Activated CD4-positive, alpha-beta T cell treated with anti-CD3 and anti-CD28 coated beads, Interleukin-2, amount 10 ng/mL, durations not matched to agents 7 days and 5 days (primary cell): ENCODE measurements at regions of chr16 and their contacts with region 1.

Region 1: DNA sequence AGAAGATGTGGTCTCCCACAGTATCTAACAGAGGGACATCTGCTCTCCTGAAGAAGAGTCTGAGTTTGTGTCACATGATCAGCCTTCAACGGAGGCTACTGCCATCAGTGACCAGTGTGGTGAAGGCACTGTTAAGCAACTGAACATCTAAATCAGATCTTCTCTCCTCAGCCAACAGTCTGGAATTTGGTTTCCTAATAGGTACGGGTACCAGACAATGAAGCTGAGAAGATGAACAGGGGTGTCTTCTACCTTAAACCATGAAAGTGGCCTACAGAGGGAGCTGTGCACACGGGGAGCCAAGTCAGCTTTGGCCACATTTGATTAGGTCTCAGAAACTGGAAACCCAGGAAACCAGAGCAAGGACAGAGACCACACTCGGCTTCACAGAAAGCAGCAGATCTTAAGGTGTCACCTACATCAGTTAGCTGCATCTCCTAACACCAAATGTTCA is 41.8 kb downstream of the BRD7 start:
- DNase-seq: peak; percentile 87
- H3K4me3 Mint-ChIP-seq: no peak overlapping the region
- H3K27ac Mint-ChIP-seq: peak overlapping the region; percentile 81
- H3K4me1 Mint-ChIP-seq: peaks cover 69% of the 10 kb centered on the region
- H3K27me3 Mint-ChIP-seq: no peaks in the 10 kb centered on the region

Region 2: GRCh38 chr16:50178491-50178941 is 148.5 kb before region 1 on chr16:
- CTCF ChIA-PET with region 1: no interaction called
- POLR2A ChIA-PET with region 1: no interaction called
- DNase-seq: no peak
- H3K4me3 Mint-ChIP-seq: no peak overlapping the region
- H3K27ac Mint-ChIP-seq: no peak overlapping the region
- H3K4me1 Mint-ChIP-seq: peaks cover 25% of the 10 kb centered on the region
- H3K27me3 Mint-ChIP-seq: no peaks in the 10 kb centered on the region

Region 3: GRCh38 chr16:50273681-50274325 is 53.2 kb before region 1 on chr16:
- CTCF ChIA-PET with region 1: interaction called, 15 read pairs
- POLR2A ChIA-PET with region 1: no interaction called
- DNase-seq: peak; percentile 62
- H3K4me3 Mint-ChIP-seq: peak overlapping the region; percentile 89
- H3K27ac Mint-ChIP-seq: peak overlapping the region; percentile 97
- H3K4me1 Mint-ChIP-seq: peaks cover 97% of the 10 kb centered on the region
- H3K27me3 Mint-ChIP-seq: no peaks in the 10 kb centered on the region

Region 4: DNA sequence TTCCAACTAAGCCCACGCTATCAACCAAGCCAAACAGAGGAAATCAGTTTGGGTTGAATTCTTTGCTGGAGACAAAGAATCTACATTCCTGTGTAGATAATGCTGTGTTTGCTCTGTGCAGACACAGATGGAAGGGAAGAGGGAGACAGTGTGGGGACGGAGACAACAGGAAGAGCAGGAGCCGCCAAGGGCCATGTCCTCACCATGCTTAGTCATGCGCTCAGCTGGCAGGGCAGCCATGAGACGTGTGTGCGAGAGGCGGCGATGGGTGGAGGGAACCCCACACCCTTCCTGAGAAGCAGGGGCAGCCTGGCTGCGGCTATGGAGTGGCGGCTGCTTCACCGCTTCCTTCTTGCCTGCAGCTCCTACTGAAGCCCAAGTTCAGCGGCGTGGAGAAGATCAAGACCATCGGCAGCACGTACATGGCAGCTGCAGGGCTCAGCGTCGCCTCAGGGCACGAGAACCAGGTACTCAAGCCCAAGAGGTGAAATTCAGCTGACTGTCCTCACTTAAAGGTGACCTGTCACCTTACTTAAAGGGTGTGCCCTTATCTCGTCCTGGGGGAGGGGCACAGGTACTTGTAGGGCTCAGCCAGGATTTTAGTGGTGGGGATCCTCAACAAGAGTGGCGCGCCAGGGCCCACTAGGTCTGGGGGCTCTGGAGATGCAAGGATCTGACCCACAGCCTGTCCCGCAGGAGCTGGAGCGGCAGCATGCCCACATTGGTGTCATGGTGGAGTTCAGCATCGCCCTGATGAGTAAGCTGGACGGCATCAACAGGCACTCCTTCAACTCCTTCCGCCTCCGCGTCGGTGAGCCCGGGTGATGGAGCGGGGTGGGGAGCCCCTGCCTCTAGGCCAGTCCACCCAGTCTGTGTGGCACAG is 13.1 kb before region 1 on chr16:
- CTCF ChIA-PET with region 1: interaction called, 32 read pairs
- POLR2A ChIA-PET with region 1: no interaction called
- DNase-seq: peak; percentile 73
- H3K4me3 Mint-ChIP-seq: peak overlapping the region; percentile 47
- H3K27ac Mint-ChIP-seq: peak overlapping the region; percentile 87
- H3K4me1 Mint-ChIP-seq: peaks cover 52% of the 10 kb centered on the region
- H3K27me3 Mint-ChIP-seq: no peaks in the 10 kb centered on the region

Region 5: GRCh38 chr16:50354629-50355456 is 27.9 kb after region 1 on chr16:
- CTCF ChIA-PET with region 1: interaction called, 17 read pairs
- POLR2A ChIA-PET with region 1: interaction called, 6 read pairs
- DNase-seq: no peak
- H3K4me3 Mint-ChIP-seq: no peak overlapping the region
- H3K27ac Mint-ChIP-seq: no peak overlapping the region
- H3K4me1 Mint-ChIP-seq: peaks cover 35% of the 10 kb centered on the region
- H3K27me3 Mint-ChIP-seq: no peaks in the 10 kb centered on the region

Region 6: DNA sequence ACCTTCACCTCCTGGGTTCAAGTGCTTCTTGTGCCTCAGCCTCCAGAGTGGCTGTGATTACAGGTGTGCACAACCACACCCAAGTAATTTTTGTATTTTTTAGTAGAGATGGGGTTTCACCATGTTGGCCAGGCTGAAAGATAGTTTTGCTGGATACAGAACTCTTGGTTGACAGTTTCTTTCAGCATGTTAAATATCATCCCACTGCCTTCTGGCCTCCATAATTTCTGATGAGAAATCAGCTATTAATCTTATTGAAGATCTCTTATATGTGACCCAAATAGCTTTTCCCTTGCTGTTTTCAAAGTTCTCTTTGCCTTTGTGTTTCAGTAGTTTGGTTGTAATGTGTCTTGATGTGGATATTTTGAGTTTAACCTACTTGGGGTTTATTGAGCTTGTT is 92.1 kb after region 1 on chr16:
- CTCF ChIA-PET with region 1: no interaction called
- POLR2A ChIA-PET with region 1: no interaction called
- DNase-seq: no peak
- H3K4me3 Mint-ChIP-seq: no peak overlapping the region
- H3K27ac Mint-ChIP-seq: no peak overlapping the region
- H3K4me1 Mint-ChIP-seq: no peaks in the 10 kb centered on the region
- H3K27me3 Mint-ChIP-seq: peaks cover 21% of the 10 kb centered on the region

Region 7: GRCh38 chr16:50806099-50807062 is 479.4 kb after region 1 on chr16:
- CTCF ChIA-PET with region 1: interaction called, 10 read pairs
- POLR2A ChIA-PET with region 1: no interaction called
- DNase-seq: peak; percentile 90
- H3K4me3 Mint-ChIP-seq: peak overlapping the region; percentile 59
- H3K27ac Mint-ChIP-seq: peak overlapping the region; percentile 71
- H3K4me1 Mint-ChIP-seq: peaks cover 17% of the 10 kb centered on the region
- H3K27me3 Mint-ChIP-seq: no peaks in the 10 kb centered on the region